ENCODE measurements at regions of chr11 and their contacts with region 1.

Region 1: GRCh38 chr11:95067039-95067840 is 521 bp downstream of the SRSF8 start:
- DNase-seq: peak; percentile 82
- H3K4me3 Mint-ChIP-seq: peak overlapping the region; percentile 91
- H3K27ac Mint-ChIP-seq: peak overlapping the region; percentile 96
- H3K4me1 Mint-ChIP-seq: peaks cover 23% of the 10 kb centered on the region
- H3K27me3 Mint-ChIP-seq: no peaks in the 10 kb centered on the region

Region 2: DNA sequence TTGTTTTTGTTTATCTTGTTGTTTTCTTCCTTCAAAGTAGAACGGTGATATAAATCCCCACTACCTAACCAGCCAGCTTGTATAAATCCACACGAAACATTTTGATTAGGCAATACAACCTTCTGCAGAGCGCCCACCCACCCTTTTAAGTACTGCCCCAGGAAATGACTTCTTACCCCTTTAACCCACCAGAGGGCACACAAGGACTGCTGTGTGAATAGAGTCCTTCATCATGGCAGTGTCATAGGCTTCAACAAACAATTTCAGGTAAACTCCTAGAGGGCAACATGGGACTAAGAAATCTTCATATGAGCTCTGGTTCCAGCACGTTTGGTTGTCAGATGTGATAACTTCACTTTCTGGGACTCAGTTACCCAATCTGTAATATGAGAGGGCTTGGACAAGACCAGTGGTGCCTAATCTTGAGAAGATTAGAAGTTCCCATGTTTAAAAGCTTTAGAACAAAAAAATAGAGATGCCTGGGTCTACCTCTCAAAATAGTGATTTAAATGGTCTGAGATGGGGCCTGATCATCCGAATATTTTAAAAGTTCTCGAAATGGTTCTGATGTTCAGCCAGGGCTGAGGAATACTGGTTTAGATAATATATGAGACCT is 444.0 kb before region 1 on chr11:
- CTCF ChIA-PET with region 1: interaction called, 3 read pairs
- intact Hi-C with region 1: loop called (anchors 1 kb)
- DNase-seq: peak; percentile 78
- H3K4me3 Mint-ChIP-seq: no peak overlapping the region
- H3K27ac Mint-ChIP-seq: no peak overlapping the region
- H3K4me1 Mint-ChIP-seq: no peaks in the 10 kb centered on the region
- H3K27me3 Mint-ChIP-seq: peaks cover 7% of the 10 kb centered on the region

Region 3: GRCh38 chr11:94973099-94973968 is 93.9 kb before region 1 on chr11 and contains the starts of genes CWC15 and KDM4D:
- CTCF ChIA-PET with region 1: interaction called, 8 read pairs
- intact Hi-C with region 1: loop called (anchors 1 kb)
- DNase-seq: peak; percentile 97
- H3K4me3 Mint-ChIP-seq: peak within 1 kb of the TSS; percentile 97
- H3K27ac Mint-ChIP-seq: peak within 1 kb of the TSS; percentile 89
- H3K4me1 Mint-ChIP-seq: peaks cover 38% of the 10 kb centered on the region
- H3K27me3 Mint-ChIP-seq: no peaks in the 10 kb centered on the region
- total RNA-seq, gene CWC15: 70.6 to 72.3 TPM
- total RNA-seq, gene KDM4D: 1.7 to 2.1 TPM

Region 4: DNA sequence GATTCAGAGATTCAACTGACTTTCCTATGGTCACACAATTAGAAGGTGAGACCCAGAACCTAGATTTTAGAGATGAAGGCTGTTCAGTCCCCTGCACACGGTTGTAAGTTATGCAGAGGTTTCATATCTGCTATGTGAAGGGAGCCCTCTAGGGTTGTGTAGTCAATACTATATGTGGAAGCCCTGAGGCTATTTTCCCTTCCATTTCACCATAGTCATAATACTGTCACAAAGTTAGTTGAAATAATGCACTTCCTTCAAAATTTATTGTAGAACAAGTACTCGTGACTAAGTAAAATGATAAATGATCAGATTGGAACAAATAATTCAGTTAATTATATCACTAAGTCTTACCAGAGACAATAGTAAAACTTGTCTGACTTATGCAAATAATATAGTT is 71.2 kb after region 1 on chr11:
- CTCF ChIA-PET with region 1: interaction called, 42 read pairs
- intact Hi-C with region 1: loop called (anchors 1 kb)
- DNase-seq: no peak
- H3K4me3 Mint-ChIP-seq: no peak overlapping the region
- H3K27ac Mint-ChIP-seq: no peak overlapping the region
- H3K4me1 Mint-ChIP-seq: peaks cover 7% of the 10 kb centered on the region
- H3K27me3 Mint-ChIP-seq: peaks cover 9% of the 10 kb centered on the region

Region 5: DNA sequence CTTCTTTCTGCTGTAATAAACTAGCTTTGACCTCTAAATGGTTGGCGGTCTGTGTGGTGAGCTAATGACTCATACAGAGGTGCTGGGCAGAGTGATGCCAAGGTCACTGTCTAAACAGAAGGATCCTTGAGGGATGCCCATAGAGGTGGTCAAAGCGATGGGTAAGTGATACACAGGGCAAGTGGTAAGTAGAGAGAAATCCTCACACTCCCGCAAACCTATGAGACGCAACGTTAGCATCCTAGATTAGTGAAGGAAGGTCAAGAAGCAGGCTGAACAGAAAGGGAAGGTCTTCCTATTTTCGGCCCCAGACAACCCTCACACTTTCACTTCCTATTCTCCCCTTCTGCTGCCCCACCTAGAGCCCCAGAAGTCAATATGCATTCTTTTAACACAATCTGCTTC is 229.4 kb after region 1 on chr11:
- CTCF ChIA-PET with region 1: no interaction called
- intact Hi-C with region 1: no loop called
- DNase-seq: no peak
- H3K4me3 Mint-ChIP-seq: no peak overlapping the region
- H3K27ac Mint-ChIP-seq: no peak overlapping the region
- H3K4me1 Mint-ChIP-seq: peaks cover 31% of the 10 kb centered on the region
- H3K27me3 Mint-ChIP-seq: no peaks in the 10 kb centered on the region

Region 6: DNA sequence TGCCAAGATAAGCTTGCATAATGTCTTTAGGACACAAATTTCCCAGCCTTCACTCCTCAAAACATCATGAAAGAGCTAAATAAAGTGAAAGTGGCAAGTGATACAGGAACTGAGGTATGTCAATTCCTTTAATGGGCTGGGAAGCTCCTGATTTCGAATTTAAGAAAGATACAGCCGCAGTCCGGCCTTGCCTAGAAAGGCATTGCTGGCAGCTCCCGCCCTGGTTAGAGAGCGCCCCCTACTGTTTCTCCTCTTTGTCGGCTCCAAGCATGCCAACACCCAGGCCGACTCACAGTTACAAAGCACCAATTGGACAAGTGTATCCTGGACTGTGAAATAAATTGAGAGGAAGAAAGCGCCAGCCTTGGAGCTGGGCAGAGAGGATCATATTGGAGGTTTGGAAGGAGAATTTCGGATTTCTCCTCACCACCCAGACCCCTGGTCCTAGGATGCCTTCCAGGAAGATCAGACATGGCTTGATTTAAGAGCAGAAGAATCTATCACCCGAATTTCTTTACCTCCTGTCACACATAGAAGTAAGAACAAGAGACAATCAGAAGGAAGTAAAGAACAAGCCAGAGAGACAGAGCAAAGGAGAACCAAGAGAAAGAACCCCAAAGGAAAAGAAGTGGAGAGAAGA is 638.4 kb after region 1 on chr11:
- CTCF ChIA-PET with region 1: interaction called, 7 read pairs
- intact Hi-C with region 1: loop called (anchors 2 kb)
- DNase-seq: peak; percentile 95
- H3K4me3 Mint-ChIP-seq: no peak overlapping the region
- H3K27ac Mint-ChIP-seq: no peak overlapping the region
- H3K4me1 Mint-ChIP-seq: peaks cover 16% of the 10 kb centered on the region
- H3K27me3 Mint-ChIP-seq: no peaks in the 10 kb centered on the region

Region 7: GRCh38 chr11:96389720-96390487 is 1322.7 kb after region 1 on chr11 and contains the starts of genes CCDC82 and JRKL:
- CTCF ChIA-PET with region 1: no interaction called
- intact Hi-C with region 1: loop called (anchors 5 kb)
- DNase-seq: peak; percentile 99
- H3K4me3 Mint-ChIP-seq: peak within 1 kb of the TSS; percentile 89
- H3K27ac Mint-ChIP-seq: peak within 1 kb of the TSS; percentile 91
- H3K4me1 Mint-ChIP-seq: peaks cover 58% of the 10 kb centered on the region
- H3K27me3 Mint-ChIP-seq: no peaks in the 10 kb centered on the region
- total RNA-seq, gene CCDC82: 32.0 to 34.0 TPM
- total RNA-seq, gene JRKL: 12.3 to 12.7 TPM